ENCODE measurements at regions of chr9 and their contacts with region 1.

Region 1: GRCh38 chr9:16544842-16545241 is 325.6 kb downstream of the BNC2 start:
- DNase-seq: no peak
- ATAC-seq: no peak

Region 2: DNA sequence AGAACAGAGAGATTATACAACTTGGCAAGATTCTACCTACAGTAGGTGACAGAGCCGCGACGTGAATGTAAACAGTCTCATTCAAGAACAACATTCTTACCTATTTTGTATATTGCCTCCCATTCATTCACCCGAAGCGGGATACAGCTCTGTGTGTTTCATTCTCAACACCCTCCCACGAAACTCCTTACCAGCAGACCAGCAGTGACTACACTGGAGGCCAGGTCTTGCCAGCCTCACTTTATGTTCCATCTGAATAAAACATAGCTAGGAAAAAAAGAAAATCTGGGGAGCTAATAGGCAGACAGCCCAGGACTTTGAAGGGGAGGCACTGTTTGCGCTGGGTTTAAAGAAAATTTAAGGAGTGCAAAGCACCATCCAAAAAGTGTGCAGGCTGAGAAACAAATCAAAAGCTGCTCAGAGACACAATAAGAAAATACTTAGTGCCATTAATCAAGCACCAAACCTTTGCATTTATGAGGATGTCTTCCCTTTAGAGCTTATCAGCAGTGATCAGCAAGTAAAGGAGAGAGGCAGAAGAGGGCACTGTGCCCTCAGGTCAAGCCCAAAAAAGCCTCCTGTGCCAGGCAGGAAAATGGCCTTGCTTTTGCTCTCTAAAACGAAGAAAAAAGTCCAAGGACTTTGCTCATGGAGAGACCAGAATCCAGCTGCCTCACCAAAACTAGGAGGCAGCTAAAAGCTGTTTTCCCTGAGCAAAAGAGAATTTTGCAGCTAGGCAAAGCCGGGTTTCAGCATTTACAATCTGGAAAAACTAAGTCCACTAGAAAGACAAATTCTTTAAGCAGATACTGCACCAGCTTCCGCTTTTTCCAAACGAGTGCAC is 30.5 kb after region 1 on chr9:
- intact Hi-C with region 1: no loop called
- DNase-seq: no peak
- ATAC-seq: no peak

Region 3: GRCh38 chr9:16611983-16612382 is 67.1 kb after region 1 on chr9:
- intact Hi-C with region 1: no loop called
- DNase-seq: no peak
- ATAC-seq: peak; percentile 62

Region 4: DNA sequence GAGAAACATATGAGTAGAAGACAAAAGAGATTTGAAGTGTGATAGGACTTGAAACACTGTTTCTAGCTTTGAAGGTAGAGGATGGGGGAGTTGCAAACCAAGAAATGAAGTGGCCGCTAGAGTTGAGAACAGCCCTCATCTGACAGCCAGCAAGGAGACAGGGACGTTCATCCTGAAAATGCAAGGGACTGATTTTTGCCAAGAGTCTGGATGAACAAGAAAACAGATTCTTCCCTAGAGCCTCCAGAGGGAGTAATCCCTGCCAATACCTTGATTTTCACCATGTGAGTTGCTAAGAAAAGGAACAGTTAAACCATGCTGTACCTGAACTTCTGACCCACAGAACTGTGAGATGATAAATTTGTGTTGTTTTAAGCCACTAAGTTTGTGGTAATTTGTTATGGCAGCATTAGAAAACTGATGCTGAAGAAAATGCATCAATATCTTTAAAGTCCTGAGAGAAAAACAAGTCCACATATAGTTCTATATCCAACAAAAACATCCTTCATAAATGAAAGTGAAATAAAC is 1775.1 kb after region 1 on chr9:
- intact Hi-C with region 1: loop called (anchors 5 kb)
- DNase-seq: no peak
- ATAC-seq: peak; percentile 61

Measured in sciatic nerve (tissue), 2 donors.